CD4-positive, alpha-beta memory T cell (primary cell): ENCODE measurements at regions of chr18 and their contacts with region 1.

Region 1: GRCh38 chr18:63320046-63320689 is 599 bp upstream of the BCL2 start:
- DNase-seq: peak; percentile 88 to 95 (median 91)
- H3K4me3 ChIP-seq: peak overlapping the region in 1 of 2 donors; percentile 48
- H3K4me3 Mint-ChIP-seq: peak overlapping the region; percentile 86 to 99 (median 90)
- H3K27ac ChIP-seq: peak overlapping the region; percentile 58
- H3K27ac Mint-ChIP-seq: peak overlapping the region; percentile 91 to 97 (median 95)
- H3K4me1 ChIP-seq: peaks cover 32% of the 10 kb centered on the region
- H3K4me1 Mint-ChIP-seq: peaks cover 18 to 65% (median 28%) of the 10 kb centered on the region in 4 donors
- H3K27me3 ChIP-seq: no peaks in the 10 kb centered on the region
- H3K27me3 Mint-ChIP-seq: no peaks in the 10 kb centered on the region

Region 2: DNA sequence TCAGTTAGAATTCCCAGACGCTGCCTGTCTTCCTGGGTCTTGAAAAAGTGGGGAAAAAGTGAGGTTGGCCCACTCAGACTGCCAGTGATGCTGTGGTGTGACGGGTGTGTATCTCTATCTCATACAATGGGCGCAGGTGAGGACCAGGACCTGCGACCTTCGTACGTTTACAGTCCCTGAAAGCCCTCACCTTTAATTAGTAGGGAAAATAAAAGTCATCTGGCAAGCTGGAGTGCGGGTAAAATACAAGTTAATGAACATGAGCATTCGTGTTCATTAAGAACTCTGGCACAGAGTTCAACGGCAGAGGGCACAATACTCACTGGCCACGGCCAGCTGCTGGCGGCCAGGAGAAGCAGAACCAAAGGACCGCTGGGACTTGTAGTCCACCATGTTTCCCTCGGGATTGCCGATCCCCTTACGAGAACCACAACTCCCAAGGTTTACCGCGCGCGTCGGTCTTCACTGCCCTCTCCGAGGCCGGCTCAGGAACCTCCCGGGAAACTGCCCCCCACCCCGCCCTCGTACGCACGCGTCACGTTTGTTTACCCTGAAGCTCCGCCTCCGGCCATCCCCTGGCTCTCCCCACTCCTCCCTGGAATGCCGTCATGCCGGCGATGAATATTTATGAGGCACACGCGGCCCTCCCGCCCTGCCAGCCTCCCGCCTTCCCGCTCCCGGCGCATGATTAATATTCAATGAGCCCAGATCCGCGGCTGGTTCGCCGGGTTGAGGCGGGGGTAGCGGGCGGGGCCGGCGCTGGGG is 605.3 kb before region 1 on chr18:
- CTCF ChIA-PET with region 1: no interaction called
- POLR2A ChIA-PET with region 1: interaction called, 3 read pairs
- intact Hi-C with region 1: loop called (anchors 2 kb)
- DNase-seq: peak; percentile 89 to 93 (median 92)
- H3K4me3 ChIP-seq: peak overlapping the region; percentile 8 to 71
- H3K4me3 Mint-ChIP-seq: peak overlapping the region; percentile 87 to 97 (median 92)
- H3K27ac ChIP-seq: peak overlapping the region; percentile 76
- H3K27ac Mint-ChIP-seq: peak overlapping the region; percentile 93 to 99 (median 98)
- H3K4me1 ChIP-seq: peaks cover 25% of the 10 kb centered on the region
- H3K4me1 Mint-ChIP-seq: peaks cover 19 to 39% (median 24%) of the 10 kb centered on the region in 4 donors
- H3K27me3 ChIP-seq: no peaks in the 10 kb centered on the region
- H3K27me3 Mint-ChIP-seq: no peaks in the 10 kb centered on the region

Region 3: DNA sequence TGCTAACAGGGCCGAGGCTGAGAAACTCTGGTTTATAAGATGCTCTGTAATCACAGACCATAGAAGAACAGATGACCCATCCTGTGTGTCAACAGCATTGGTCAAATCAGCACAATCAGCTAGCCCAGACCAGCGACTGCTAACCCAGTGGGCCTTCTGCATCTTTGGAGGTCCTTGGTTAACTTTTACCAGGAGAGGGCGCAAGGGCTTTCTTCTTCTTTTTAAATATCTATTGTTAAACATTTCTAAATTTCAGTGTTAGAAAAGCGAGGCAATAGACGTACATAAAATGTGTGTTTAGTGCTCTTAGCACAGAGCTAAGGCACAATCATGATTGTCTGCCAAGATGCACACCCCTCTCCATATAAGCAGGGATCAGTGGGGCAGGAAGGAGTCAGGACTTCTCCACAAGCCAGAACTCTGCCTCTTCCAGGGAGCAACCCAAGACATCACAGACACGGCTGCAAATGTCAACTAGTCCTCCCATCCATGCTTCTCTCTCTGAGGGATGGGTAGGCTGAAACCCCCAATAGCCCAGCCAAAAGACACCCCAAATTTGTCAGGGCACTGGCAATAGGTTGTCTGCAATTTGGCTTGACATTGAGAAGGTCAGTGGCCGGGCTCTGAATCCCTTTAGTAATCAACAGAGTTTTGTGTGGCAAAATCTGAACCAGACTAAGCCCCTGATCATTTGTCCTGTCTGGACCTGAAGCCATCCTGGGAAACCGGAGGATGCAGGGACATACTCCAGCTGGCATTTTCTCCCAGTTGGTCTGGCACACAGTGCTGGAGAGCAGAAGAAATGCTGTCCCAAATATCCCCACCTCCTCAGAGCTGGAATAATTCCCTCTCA is 188.8 kb before region 1 on chr18:
- CTCF ChIA-PET with region 1: interaction called, 175 read pairs
- POLR2A ChIA-PET with region 1: interaction called, 55 read pairs
- intact Hi-C with region 1: loop called (anchors 1 kb)
- DNase-seq: peak; percentile 61 to 73 (median 69)
- H3K4me3 ChIP-seq: no peak overlapping the region
- H3K4me3 Mint-ChIP-seq: peak overlapping the region in 5 of 8 donors; percentile 2 to 78 (median 53)
- H3K27ac ChIP-seq: peak overlapping the region; percentile 13
- H3K27ac Mint-ChIP-seq: peak overlapping the region; percentile 84 to 90 (median 89)
- H3K4me1 ChIP-seq: peaks cover 34% of the 10 kb centered on the region
- H3K4me1 Mint-ChIP-seq: peaks cover 31 to 47% (median 34%) of the 10 kb centered on the region in 4 donors
- H3K27me3 ChIP-seq: no peaks in the 10 kb centered on the region
- H3K27me3 Mint-ChIP-seq: no peaks in the 10 kb centered on the region

Region 4: DNA sequence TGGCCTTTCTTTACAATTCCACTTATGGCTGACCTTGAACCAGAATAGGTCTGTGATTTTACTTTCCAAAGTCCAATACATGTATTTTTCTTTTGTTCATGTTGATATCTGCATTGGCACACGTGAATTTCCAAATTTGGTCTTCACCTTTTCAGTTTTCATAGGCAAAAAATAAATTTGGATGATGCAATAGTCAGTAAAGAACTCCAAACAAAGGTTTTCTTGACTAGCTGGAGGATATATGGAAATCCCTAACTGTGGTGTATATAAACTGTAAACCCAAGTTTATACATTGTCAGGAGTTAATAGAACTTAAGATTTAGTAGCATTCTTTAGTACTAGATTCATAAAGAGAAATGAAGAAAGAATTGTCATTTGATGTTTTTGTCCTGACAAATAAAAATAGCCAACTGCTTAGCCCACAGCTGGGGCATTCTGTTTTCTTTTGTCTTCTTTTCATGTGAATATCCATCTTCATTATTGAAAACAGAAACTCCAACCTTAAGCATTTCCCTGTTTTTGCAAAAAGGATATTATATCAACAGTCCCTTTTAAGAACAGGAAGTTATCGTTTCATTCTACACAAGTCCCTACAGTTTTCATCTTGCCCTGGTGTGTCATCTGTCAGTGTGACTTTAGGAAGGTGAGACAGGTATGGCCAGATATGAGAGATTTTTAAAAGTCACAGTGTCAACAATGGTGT is 133.5 kb before region 1 on chr18:
- CTCF ChIA-PET with region 1: interaction called, 18 read pairs
- POLR2A ChIA-PET with region 1: interaction called, 5 read pairs
- intact Hi-C with region 1: no loop called
- DNase-seq: no peak
- H3K4me3 ChIP-seq: no peak overlapping the region
- H3K4me3 Mint-ChIP-seq: peak overlapping the region in 4 of 8 donors; percentile 1 to 68 (median 4)
- H3K27ac ChIP-seq: peak overlapping the region; percentile 1
- H3K27ac Mint-ChIP-seq: peak overlapping the region in 6 of 7 donors; percentile 3 to 88 (median 32)
- H3K4me1 ChIP-seq: peaks cover 63% of the 10 kb centered on the region
- H3K4me1 Mint-ChIP-seq: peaks cover 53 to 87% (median 69%) of the 10 kb centered on the region in 4 donors
- H3K27me3 ChIP-seq: no peaks in the 10 kb centered on the region
- H3K27me3 Mint-ChIP-seq: no peaks in the 10 kb centered on the region

Region 5: DNA sequence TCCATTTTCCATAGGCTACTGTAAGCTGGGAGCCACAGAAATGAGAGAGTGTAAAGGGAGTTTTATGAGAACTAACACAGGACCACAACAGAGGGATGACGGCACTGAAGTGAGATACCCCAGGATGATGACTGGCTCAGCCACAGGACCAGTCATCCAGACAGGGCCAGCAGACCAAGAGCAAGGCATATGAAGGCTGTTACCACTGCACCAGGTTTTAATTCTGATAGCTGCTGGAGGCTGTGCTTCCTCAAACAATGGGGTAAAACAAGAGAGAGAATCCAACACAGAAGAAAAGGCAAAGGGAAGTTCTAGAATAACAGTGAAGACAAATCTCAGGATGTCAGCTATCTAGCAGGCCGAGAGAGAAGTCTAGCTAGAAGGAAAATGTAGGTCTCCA is 95.5 kb before region 1 on chr18:
- CTCF ChIA-PET with region 1: interaction called, 21 read pairs
- POLR2A ChIA-PET with region 1: interaction called, 14 read pairs
- intact Hi-C with region 1: no loop called
- DNase-seq: peak in 1 of 5 donors; percentile 66
- H3K4me3 ChIP-seq: no peak overlapping the region
- H3K4me3 Mint-ChIP-seq: peak overlapping the region in 5 of 8 donors; percentile 13 to 79 (median 58)
- H3K27ac ChIP-seq: peak overlapping the region; percentile 27
- H3K27ac Mint-ChIP-seq: peak overlapping the region; percentile 39 to 92 (median 78)
- H3K4me1 ChIP-seq: peaks cover 84% of the 10 kb centered on the region
- H3K4me1 Mint-ChIP-seq: peaks cover 56 to 94% (median 82%) of the 10 kb centered on the region in 4 donors
- H3K27me3 ChIP-seq: no peaks in the 10 kb centered on the region
- H3K27me3 Mint-ChIP-seq: no peaks in the 10 kb centered on the region

Region 6: DNA sequence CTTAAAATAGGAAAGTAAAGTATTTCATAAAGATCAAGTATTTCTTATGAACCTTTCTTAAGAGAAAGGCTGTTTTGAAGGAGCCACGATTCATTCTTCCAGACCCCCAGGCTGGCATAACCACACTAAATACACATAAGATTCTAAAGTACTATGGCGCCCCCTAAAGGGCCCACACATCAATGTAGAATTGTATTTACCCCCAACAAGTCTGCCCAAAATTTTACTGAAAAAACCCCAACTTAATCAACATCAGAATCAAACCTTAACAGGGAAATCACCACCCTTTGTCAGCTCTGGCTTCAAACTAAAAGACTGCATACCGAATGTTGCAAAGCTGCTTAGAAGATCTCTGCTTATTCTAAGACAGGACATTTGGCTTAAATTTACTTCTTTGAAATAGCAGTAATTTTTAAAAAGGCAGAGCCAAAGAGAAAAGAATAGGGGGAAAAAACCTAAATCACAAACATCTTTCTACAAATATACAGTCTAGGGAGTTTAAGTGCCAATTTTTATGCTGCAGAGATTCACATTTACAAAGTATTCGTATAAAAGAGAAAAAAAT is 19.8 kb after region 1 on chr18:
- CTCF ChIA-PET with region 1: interaction called, 12 read pairs
- POLR2A ChIA-PET with region 1: no interaction called
- intact Hi-C with region 1: no loop called
- DNase-seq: peak in 4 of 5 donors; percentile 43 to 51 (median 49)
- H3K4me3 ChIP-seq: no peak overlapping the region
- H3K4me3 Mint-ChIP-seq: no peak overlapping the region
- H3K27ac ChIP-seq: no peak overlapping the region
- H3K27ac Mint-ChIP-seq: peak overlapping the region in 3 of 7 donors; percentile 43 to 69 (median 69)
- H3K4me1 ChIP-seq: no peaks in the 10 kb centered on the region
- H3K4me1 Mint-ChIP-seq: peaks cover 0 to 7% (median 1%) of the 10 kb centered on the region in 4 donors
- H3K27me3 ChIP-seq: no peaks in the 10 kb centered on the region
- H3K27me3 Mint-ChIP-seq: no peaks in the 10 kb centered on the region

Region 7: GRCh38 chr18:63626438-63626837 is 306.3 kb after region 1 on chr18:
- CTCF ChIA-PET with region 1: no interaction called
- POLR2A ChIA-PET with region 1: no interaction called
- intact Hi-C with region 1: no loop called
- DNase-seq: no peak
- H3K4me3 ChIP-seq: no peak overlapping the region
- H3K4me3 Mint-ChIP-seq: no peak overlapping the region
- H3K27ac ChIP-seq: no peak overlapping the region
- H3K27ac Mint-ChIP-seq: no peak overlapping the region
- H3K4me1 ChIP-seq: no peaks in the 10 kb centered on the region
- H3K4me1 Mint-ChIP-seq: no peaks in the 10 kb centered on the region
- H3K27me3 ChIP-seq: no peaks in the 10 kb centered on the region
- H3K27me3 Mint-ChIP-seq: peaks cover 1 to 2% of the 10 kb centered on the region in 2 donors